ENCODE measurements at regions of chr9 and their contacts with region 1.

Region 1: DNA sequence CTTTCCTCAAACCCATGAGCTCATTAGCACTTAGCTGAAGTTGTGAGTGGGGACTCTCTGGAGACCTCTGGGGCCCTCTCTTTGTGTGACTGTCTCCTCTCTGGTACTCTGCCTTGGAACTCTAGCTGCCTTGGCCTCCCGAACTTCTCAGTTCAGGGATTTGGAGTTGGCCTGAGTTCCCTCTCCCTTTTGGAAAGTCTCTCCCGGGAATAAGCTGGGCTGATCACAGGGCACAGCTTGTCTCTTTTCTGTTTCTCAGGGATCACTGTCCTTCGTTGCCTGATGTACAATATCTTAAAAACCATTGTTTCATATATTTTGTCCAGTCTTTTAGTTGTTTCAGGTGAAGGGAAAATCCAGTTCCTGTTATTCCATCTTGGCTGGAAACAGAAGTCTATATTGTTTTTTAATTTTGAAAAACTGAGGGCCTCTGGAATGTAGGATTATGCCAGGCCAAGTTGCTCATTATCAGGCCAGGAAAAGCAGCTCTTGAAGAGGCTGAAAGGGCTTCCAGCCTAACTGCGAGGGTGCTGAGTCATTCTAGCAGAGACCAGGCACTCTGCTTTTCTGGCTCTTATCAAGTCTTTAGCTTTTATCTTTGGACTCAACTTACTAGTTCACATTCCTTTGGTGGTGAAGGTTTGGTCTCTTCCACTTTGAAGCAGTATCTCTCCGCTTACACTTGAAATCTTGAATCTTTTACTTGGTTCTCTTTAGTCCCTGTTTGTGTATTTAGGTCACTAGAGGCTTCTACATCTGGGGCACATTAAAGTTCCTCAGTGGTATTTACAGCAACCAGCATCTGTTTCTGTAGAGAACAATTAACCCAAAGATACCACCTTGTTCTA is 8.4 kb upstream of the RGS3 start:
- DNase-seq: peak; percentile 54
- H3K4me3 ChIP-seq: no peak overlapping the region
- H3K27ac ChIP-seq: peak overlapping the region; percentile 20
- H3K4me1 ChIP-seq: peaks cover 9% of the 10 kb centered on the region
- H3K27me3 ChIP-seq: no peaks in the 10 kb centered on the region
- CTCF ChIP-seq: no peak

Region 2: GRCh38 chr9:113410207-113410864 is 44.8 kb before region 1 on chr9 and contains the starts of genes C9orf43 and POLE3:
- CTCF ChIA-PET with region 1: no interaction called
- POLR2A ChIA-PET with region 1: interaction called, 10 read pairs
- intact Hi-C with region 1: no loop called
- DNase-seq: peak; percentile 98
- H3K4me3 ChIP-seq: peak within 1 kb of the TSS; percentile 96
- H3K27ac ChIP-seq: peak within 1 kb of the TSS; percentile 92
- H3K4me1 ChIP-seq: peaks cover 11% of the 10 kb centered on the region
- H3K27me3 ChIP-seq: no peaks in the 10 kb centered on the region
- CTCF ChIP-seq: no peak
- total RNA-seq, gene C9orf43: 0.81 and 1.5 TPM in 2 replicates
- total RNA-seq, gene POLE3: 98.1 and 109 TPM in 2 replicates

Region 3: GRCh38 chr9:113720495-113720894 is 265.4 kb after region 1 on chr9:
- CTCF ChIA-PET with region 1: no interaction called
- POLR2A ChIA-PET with region 1: no interaction called
- intact Hi-C with region 1: no loop called
- DNase-seq: peak; percentile 83
- H3K4me3 ChIP-seq: no peak overlapping the region
- H3K27ac ChIP-seq: no peak overlapping the region
- H3K4me1 ChIP-seq: peaks cover 8% of the 10 kb centered on the region
- H3K27me3 ChIP-seq: no peaks in the 10 kb centered on the region
- CTCF ChIP-seq: no peak